HEK293 (cell line): ENCODE measurements at regions of chr7 and their contacts with region 1.

Region 1: DNA sequence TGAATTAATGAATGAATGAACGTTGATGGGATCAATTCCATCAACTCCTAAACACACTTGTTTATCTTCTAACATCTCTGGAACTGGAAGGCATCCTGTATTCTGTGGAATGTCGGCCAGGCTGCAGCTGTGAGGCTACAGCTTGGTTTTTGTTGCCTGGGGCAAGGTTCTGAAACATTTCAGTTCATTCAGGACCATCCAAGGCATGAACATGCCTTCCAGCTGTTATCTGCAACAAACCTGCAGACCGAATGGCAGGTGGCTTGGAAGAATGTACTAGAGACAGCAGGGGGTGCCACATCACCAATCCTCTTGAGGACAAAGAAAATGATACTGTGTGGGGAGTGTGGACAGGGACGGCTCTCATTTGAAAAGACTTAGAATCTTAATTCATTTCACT is 12.5 kb downstream of the PAPOLB start:
- H3K4me3 ChIP-seq: no peak overlapping the region
- H3K27ac ChIP-seq: no peak overlapping the region
- H3K4me1 ChIP-seq: no peaks in the 10 kb centered on the region
- CTCF ChIP-seq: no peak

Region 2: DNA sequence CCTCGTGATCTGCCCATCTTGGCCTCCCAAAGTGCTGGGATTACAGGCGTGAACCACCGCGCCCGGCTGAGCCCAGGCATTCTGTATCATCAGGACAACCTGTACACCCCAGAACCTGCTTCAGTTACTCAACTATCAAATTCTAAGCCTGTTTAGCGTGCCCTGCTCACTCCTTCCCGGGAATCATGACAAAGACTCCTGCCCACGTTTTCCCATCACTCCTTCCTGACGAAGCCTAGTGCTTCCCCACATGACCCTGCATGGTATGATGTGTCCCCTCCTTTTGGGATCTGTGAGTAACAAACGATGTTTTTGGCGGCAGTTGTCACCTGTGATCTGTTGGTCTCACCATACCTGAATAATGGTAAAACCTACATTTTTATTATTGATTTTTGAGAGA is 46.4 kb after region 1 on chr7:
- CTCF ChIA-PET with region 1: interaction called, 15 read pairs
- POLR2A ChIA-PET with region 1: no interaction called
- H3K4me3 ChIP-seq: no peak overlapping the region
- H3K27ac ChIP-seq: no peak overlapping the region
- H3K4me1 ChIP-seq: no peaks in the 10 kb centered on the region
- CTCF ChIP-seq: no peak

Region 3: GRCh38 chr7:5083311-5083711 is 233.9 kb after region 1 on chr7:
- CTCF ChIA-PET with region 1: interaction called, 11 read pairs
- POLR2A ChIA-PET with region 1: no interaction called
- H3K4me3 ChIP-seq: no peak overlapping the region
- H3K27ac ChIP-seq: no peak overlapping the region
- H3K4me1 ChIP-seq: no peaks in the 10 kb centered on the region
- CTCF ChIP-seq: no peak